ENCODE measurements at regions of chr16 and their contacts with region 1.

Region 1: GRCh38 chr16:69339289-69340108 is at the starts of genes COG8 and NIP7:
- DNase-seq: peak; percentile 88 to 98 (median 96)

Region 2: DNA sequence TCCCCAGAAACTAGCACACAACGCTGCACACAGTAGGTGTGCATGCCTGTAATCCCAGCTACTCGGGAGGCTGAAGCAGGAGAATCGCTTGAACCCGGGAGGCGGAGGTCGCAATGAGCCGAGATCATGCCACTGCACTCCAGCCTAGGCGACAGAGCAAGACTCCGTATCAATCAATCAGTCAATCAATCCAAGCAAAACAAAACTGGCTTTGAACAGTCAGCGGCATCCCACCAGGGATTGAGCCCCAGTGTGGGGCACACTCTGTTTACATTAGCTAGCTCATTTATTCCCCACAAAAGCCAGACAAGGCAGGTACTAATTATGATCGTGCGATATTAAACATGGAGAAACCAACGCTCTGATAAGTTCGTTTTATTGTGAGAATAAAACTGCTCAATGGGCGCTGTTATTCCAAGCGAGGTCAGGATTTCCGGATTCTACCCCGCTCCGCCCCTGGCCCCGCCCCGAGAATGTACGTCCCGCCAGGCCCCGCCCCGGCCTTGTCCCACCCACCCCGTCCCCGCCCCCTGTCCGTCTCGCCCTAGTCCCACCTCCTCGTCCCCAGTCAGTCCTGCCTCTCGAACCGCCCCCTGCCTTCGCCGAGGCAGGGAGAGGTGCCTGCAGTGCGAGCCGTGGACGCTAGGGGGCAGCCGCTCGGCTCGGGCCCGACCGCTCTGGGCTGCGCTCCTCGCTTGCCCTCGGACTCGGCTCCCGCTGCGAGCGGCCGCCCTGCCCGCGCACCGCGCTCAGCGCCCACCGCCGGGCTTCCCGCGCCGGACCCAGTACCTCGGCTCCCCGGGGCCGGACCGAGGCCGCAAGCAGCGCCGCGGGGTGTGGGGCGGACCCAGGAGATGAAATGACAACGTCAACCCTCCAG is 28.6 kb before region 1 on chr16 and contains the start of gene VPS4A:
- intact Hi-C with region 1: loop called (anchors 2 kb)
- DNase-seq: peak; percentile 93 to 99 (median 98)

Region 3: GRCh38 chr16:69386596-69386995 is 47.1 kb after region 1 on chr16:
- intact Hi-C with region 1: loop called (anchors 10 kb)
- DNase-seq: no peak

Measured in head of caudate nucleus (tissue), 42 donors.